ENCODE measurements at regions of chr15 and their contacts with region 1.

Region 1: DNA sequence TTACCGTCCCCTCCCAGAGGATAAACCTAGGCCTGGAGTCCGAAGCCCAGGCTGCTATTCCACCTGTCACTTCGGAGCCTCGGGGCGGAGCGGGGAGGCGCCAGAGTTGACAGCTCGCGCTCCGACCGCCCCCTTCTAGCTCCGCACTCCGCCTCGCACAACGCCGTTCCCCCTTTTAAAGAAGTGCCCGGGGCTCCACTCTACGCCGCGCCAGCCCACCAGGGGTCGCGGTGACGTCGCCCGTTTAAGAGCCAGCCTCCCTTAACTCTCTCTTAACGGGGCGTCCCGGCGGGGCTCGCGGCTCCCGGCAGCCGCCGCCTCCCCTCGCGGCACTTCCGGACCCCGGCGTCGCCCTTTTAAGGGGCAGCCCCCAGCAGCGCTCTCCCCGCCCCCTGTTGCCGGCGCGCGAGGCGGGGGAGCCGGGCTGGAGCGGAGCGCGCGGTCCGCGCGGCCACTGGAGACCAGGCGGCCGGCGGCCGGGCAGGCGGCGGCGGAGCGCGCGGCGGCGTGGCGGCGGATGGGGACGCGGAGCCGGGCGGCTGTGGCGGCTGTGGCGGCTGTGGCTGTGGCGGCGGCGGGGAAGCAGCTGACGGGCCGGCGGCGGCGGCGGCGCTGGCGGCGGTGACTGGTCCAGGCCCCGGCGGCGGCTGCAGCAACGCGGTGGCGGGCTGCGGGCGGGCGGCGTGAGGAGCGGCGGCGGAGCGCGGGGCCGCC is at the start of gene INAFM2:
- DNase-seq: peak; percentile 84
- H3K4me3 ChIP-seq: peak within 1 kb of the TSS; percentile 70 to 77
- H3K27ac ChIP-seq: peak within 1 kb of the TSS; percentile 67 to 69
- H3K4me1 ChIP-seq: peaks cover 4% of the 10 kb centered on the region
- H3K27me3 ChIP-seq: no peaks in the 10 kb centered on the region
- CTCF ChIP-seq: peak; percentile 57 to 88 (median 71)
- POLR2A ChIP-seq: no peak
- total RNA-seq, gene INAFM2: 18.7 to 24.3 TPM

Region 2: DNA sequence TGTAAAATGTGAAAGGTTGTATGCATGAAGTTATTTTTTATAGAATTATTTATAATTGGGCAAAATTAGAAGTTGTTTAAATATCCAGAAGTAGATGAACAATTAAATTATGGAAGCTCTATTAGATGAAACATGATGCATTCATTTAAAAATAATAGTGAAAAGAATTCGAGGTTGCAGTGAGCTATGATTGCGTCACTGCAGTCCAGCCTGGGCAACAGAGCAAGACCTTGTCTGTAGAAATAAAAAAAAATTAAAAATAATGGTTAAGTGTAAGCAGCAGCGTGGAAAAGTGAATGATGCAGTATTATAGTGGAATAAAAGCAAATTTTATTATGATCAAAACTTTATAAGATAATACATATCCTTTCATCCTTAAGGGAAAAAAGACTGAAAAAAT is 148.2 kb before region 1 on chr15:
- intact Hi-C with region 1: no loop called
- DNase-seq: no peak
- H3K4me3 ChIP-seq: no peak overlapping the region
- H3K27ac ChIP-seq: no peak overlapping the region
- H3K4me1 ChIP-seq: no peaks in the 10 kb centered on the region
- H3K27me3 ChIP-seq: no peaks in the 10 kb centered on the region
- CTCF ChIP-seq: no peak
- POLR2A ChIP-seq: no peak

Region 3: DNA sequence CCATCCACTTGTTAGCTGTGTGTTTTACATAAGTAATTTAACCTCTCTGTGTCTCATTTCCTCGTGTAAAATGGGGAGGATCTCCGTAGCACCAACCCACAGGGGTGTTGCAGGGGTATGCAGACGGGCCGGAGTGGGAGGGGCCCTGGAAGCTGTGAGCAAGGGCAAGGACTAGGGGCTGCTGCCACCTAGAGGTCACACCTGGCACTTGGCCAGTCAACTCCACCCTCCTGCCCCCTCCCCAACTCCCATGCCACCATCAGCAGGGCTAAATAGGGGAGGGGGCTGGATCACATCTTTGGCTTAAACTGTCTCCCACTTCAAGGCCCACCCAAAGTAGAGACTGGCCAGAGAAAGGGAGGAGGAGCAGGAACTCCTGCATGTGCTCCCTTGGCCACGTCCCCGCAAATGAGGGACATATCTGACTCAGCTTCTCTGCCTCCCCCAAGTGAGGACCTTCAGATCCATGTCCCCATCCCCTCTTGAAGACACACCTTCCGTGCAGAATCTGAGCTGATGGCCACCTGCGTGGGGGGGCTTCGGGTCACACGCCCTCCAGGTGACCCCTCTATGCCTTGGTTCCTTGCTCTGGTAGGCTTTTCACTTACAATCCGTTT is 14.8 kb after region 1 on chr15:
- intact Hi-C with region 1: loop called (anchors 2 kb)
- DNase-seq: no peak
- H3K4me3 ChIP-seq: no peak overlapping the region
- H3K27ac ChIP-seq: peak overlapping the region in 1 of 2 donors; percentile 24
- H3K4me1 ChIP-seq: peaks cover 20% of the 10 kb centered on the region
- H3K27me3 ChIP-seq: no peaks in the 10 kb centered on the region
- CTCF ChIP-seq: peak in 3 of 4 experiments; percentile 45 to 60 (median 56)
- POLR2A ChIP-seq: no peak

Region 4: DNA sequence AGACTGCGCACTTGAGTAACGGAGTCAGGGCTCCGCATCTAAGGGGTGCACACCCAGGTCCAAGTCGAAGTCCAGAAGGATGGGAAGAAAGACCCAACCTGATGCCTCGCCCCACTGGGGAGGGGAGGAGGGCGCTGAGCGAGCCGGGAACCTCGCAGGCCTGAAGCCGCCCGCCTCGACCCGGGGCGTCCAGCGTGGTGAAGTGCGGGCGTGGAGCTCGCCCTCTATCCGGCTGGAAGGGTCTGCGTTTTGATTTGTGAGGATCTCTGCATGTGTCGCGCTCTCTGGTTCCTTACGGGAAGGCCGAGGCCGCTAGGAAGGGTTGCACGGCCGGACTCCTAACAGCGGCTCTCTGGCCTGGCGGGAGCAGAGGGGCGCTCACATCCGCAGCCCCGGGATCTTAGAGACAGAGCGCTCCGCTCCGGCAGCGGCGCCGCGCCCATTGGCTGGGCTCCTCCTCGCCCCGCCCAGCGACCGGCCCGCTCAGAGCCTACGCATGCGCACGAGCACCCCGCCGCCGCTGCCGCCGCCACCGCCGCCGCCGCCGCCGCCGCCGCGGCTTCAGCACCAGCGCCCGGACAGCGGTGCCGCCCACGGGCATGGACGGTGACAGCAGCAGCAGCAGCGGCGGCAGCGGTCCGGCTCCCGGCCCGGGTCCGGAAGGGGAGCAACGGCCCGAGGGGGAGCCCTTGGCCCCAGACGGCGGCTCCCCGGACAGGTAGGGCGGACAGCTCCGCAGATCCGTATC is 34.5 kb after region 1 on chr15 and contains the start of gene DISP2:
- intact Hi-C with region 1: loop called (anchors 5 kb)
- DNase-seq: peak; percentile 80
- H3K4me3 ChIP-seq: peak within 1 kb of the TSS; percentile 28 to 40
- H3K27ac ChIP-seq: no peak within 1 kb of the TSS
- H3K4me1 ChIP-seq: peaks cover 4% of the 10 kb centered on the region
- H3K27me3 ChIP-seq: no peaks in the 10 kb centered on the region
- CTCF ChIP-seq: peak in 1 of 4 experiments; percentile 21
- POLR2A ChIP-seq: no peak
- total RNA-seq, gene DISP2: 0.27 to 1.6 TPM

Measured in prostate gland (tissue), 2 donors.